A549 (cell line): ENCODE measurements at regions of chr2 and their contacts with region 1.

Region 1: DNA sequence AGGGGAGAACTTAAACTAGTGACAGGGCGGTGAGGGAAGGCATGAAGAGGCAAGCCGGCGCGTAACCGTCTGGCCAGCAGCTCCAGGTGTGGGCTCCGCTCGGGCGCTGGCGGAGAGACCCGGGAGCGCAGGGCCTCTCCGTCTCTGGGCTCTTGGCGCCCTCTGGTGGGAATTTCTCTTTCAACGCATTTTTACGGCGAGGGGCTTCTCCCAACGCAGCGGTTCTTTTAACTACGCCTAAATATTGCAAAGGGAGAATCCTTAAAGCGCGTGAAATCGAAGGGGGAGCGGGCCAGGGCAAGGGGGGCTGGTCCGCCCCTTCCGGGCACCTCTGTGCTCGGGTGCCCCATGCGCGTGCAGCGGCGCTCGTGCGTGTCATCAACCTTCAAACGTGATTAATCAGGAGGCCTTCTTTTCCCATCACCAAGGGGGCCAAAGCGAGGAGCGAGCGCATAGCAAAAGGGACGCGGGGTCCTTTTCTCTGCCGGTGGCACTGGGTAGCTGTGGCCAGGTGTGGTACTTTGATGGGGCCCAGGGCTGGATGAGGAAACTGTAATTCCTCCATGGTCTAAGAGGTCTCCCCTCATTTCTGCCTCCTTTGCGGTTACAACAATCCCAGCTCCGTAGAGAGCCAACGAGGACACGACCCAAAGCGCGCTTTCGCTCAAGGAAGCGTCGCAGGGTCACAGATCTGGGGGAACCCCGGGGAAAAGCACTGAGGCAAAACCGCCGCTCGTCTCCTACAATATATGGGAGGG is 762 bp upstream of the GAD1 start:
- DNase-seq: peak; percentile 67
- ATAC-seq: peak; percentile 51 to 80
- H3K4me3 ChIP-seq: peak overlapping the region; percentile 43
- H3K27ac ChIP-seq: no peak overlapping the region
- H3K4me1 ChIP-seq: peaks cover 23% of the 10 kb centered on the region
- CTCF ChIP-seq: peak; percentile 85
- EP300 ChIP-seq: no peak
- POLR2A ChIP-seq: no peak
- RAD21 ChIP-seq: peak; percentile 85 to 92

Region 2: GRCh38 chr2:170324640-170325046 is 491.3 kb before region 1 on chr2:
- CTCF ChIA-PET with region 1: interaction called, 15 read pairs
- POLR2A ChIA-PET with region 1: no interaction called
- DNase-seq: peak; percentile 9 to 54
- ATAC-seq: peak; percentile 85
- H3K4me3 ChIP-seq: no peak overlapping the region
- H3K27ac ChIP-seq: no peak overlapping the region
- H3K4me1 ChIP-seq: no peaks in the 10 kb centered on the region
- CTCF ChIP-seq: peak; percentile 62
- EP300 ChIP-seq: no peak
- POLR2A ChIP-seq: no peak
- RAD21 ChIP-seq: peak; percentile 66 to 84

Region 3: GRCh38 chr2:170369894-170370293 is 446.0 kb before region 1 on chr2:
- CTCF ChIA-PET with region 1: interaction called, 95 read pairs
- POLR2A ChIA-PET with region 1: no interaction called
- DNase-seq: peak; percentile 2 to 30
- ATAC-seq: peak in 1 of 2 experiments; percentile 51; a peak in 1 of 6 replicates
- H3K4me3 ChIP-seq: no peak overlapping the region
- H3K27ac ChIP-seq: no peak overlapping the region
- H3K4me1 ChIP-seq: no peaks in the 10 kb centered on the region
- CTCF ChIP-seq: peak; percentile 55
- EP300 ChIP-seq: no peak
- POLR2A ChIP-seq: no peak
- RAD21 ChIP-seq: peak; percentile 42 to 62; a peak in 4 of 5 replicates

Region 4: GRCh38 chr2:170386554-170386953 is 429.4 kb before region 1 on chr2:
- CTCF ChIA-PET with region 1: interaction called, 91 read pairs
- POLR2A ChIA-PET with region 1: no interaction called
- DNase-seq: no peak
- ATAC-seq: no peak
- H3K4me3 ChIP-seq: no peak overlapping the region
- H3K27ac ChIP-seq: no peak overlapping the region
- H3K4me1 ChIP-seq: no peaks in the 10 kb centered on the region
- CTCF ChIP-seq: no peak
- EP300 ChIP-seq: no peak
- POLR2A ChIP-seq: no peak
- RAD21 ChIP-seq: no peak

Region 5: DNA sequence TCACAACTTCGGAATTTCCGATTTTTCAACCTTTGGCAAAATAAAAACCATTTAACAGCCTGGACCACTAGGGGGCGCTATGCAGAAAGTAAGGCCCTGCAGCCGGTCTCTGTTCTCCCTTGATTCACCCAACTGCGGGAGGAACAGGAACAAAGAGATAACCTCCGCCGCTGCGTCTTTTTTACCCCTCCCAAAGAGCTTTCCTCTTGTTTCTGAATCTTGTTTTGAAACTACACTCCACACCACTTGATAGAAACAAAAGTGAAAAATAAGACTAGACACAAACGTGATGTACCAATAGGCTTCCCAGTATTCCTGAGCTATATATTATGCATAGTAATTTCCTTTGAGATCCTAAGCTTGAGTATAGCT is 406.8 kb before region 1 on chr2:
- CTCF ChIA-PET with region 1: interaction called, 64 read pairs
- POLR2A ChIA-PET with region 1: no interaction called
- DNase-seq: peak in 1 of 2 experiments; percentile 61
- ATAC-seq: peak; percentile 47 to 74; a peak in 3 of 6 replicates
- H3K4me3 ChIP-seq: no peak overlapping the region; the same call in 2 of the 3 replicates
- H3K27ac ChIP-seq: no peak overlapping the region
- H3K4me1 ChIP-seq: no peaks in the 10 kb centered on the region
- CTCF ChIP-seq: peak; percentile 79
- EP300 ChIP-seq: no peak
- POLR2A ChIP-seq: no peak
- RAD21 ChIP-seq: peak; percentile 50 to 58